ENCODE measurements at regions of chr16 and their contacts with region 1.

Region 1: GRCh38 chr16:81696961-81697615 is 82.0 kb upstream of the PLCG2 start:
- DNase-seq: peak; percentile 57 to 82
- H3K4me3 ChIP-seq: no peak overlapping the region
- H3K27ac ChIP-seq: no peak overlapping the region
- H3K4me1 ChIP-seq: no peaks in the 10 kb centered on the region
- H3K27me3 ChIP-seq: no peaks in the 10 kb centered on the region
- CTCF ChIP-seq: peak; percentile 93 to 99 (median 98)
- EP300 ChIP-seq: no peak
- POLR2A ChIP-seq: no peak
- RAD21 ChIP-seq: peak; percentile 94 to 97

Region 2: DNA sequence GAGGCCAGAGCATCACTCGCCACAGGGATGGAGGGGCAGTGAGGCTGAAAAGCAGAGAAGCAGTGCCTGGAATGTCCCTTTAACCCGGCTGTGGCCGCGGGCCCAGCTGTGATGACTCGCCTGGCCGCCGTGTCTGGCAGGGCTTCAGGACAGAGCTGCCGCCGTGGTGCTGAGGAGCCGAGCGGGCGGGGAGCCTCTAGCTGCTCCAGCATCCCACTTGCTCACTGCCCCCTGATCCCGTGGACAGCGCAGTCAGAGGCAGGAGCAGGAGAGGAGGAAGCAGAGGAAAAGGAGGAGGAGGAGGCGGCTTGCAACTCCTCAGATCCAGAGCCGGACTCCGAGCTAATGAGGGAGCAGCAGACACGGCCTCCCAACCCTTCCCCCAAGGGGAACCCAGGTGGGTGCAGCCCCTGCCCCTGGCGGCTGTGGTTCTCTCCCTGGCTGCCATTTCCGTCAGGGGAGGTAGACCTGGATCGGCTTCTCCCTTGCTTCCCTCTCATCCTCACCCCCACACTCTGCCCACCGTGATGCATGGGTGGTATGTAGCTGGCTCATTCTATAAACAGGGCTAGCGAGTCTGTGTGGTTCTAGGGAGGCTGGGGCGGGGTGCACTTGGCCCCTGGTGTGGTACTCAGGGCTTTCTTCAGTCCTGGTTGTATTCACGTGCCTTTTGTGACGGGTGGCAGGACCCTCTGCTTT is 86.8 kb before region 1 on chr16:
- CTCF ChIA-PET with region 1: interaction called, 134 read pairs
- POLR2A ChIA-PET with region 1: no interaction called
- DNase-seq: no peak
- H3K4me3 ChIP-seq: no peak overlapping the region
- H3K27ac ChIP-seq: no peak overlapping the region
- H3K4me1 ChIP-seq: no peaks in the 10 kb centered on the region; a peak in 1 of 7 replicates
- H3K27me3 ChIP-seq: no peaks in the 10 kb centered on the region; a peak in 1 of 7 replicates
- CTCF ChIP-seq: no peak
- EP300 ChIP-seq: no peak
- POLR2A ChIP-seq: no peak
- RAD21 ChIP-seq: no peak

Region 3: DNA sequence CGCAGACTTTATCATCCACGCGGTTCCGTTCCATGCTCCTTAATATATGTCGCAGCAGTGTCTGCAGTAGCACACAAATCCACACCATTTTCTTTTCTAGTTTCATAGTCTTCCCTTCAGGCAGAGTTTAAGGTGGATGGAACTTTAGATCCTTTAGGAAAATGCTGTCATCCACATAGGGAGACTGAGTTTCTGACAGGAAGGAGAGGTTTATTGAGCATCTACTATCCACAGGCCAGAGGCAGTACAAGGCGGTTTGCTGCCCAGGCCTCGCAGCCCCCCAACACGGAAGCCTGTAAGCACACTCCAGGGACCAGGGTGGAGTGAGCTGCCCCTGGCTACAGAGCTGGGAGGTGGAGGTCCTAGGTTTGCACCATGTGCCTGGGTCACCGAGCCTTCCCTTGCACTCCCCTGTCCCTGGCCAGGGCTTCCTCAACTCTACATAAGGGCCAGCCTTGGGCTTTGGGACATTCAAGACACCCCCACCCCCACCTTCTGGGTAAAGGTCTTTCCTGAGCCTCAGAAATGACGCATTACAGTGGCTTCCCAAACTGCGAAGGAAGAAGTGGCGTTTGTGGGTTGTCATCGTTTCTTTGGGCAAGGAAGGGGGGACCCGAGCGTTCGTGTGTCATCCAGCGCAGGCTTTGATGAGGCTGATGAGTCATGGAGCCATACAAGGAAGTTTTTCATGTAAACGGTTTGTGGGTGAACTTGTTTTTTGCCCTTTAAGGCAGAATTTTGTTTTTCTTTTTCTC is 64.5 kb before region 1 on chr16:
- CTCF ChIA-PET with region 1: interaction called, 27 read pairs
- POLR2A ChIA-PET with region 1: no interaction called
- DNase-seq: no peak
- H3K4me3 ChIP-seq: no peak overlapping the region
- H3K27ac ChIP-seq: peak overlapping the region; percentile 41; the same call in 1 of the 2 replicates
- H3K4me1 ChIP-seq: peaks cover 8 to 43% (median 16%) of the 10 kb centered on the region in 4 experiments
- H3K27me3 ChIP-seq: no peaks in the 10 kb centered on the region
- CTCF ChIP-seq: no peak
- EP300 ChIP-seq: no peak
- POLR2A ChIP-seq: no peak
- RAD21 ChIP-seq: no peak

Region 4: GRCh38 chr16:81686391-81687130 is 10.5 kb before region 1 on chr16:
- CTCF ChIA-PET with region 1: interaction called, 36 read pairs
- POLR2A ChIA-PET with region 1: interaction called, 3 read pairs
- DNase-seq: no peak
- H3K4me3 ChIP-seq: no peak overlapping the region
- H3K27ac ChIP-seq: no peak overlapping the region
- H3K4me1 ChIP-seq: peaks cover 0 to 5% (median 0%) of the 10 kb centered on the region in 4 experiments; a peak in 4 of 7 replicates
- H3K27me3 ChIP-seq: no peaks in the 10 kb centered on the region
- CTCF ChIP-seq: no peak
- EP300 ChIP-seq: no peak
- POLR2A ChIP-seq: no peak
- RAD21 ChIP-seq: no peak

Region 5: GRCh38 chr16:81717662-81718189 is 20.6 kb after region 1 on chr16:
- CTCF ChIA-PET with region 1: interaction called, 17 read pairs
- POLR2A ChIA-PET with region 1: no interaction called
- DNase-seq: no peak
- H3K4me3 ChIP-seq: no peak overlapping the region
- H3K27ac ChIP-seq: no peak overlapping the region
- H3K4me1 ChIP-seq: peaks cover 0 to 27% (median 15%) of the 10 kb centered on the region in 4 experiments; a peak in 4 of 7 replicates
- H3K27me3 ChIP-seq: 0 out of 7 replicates have a peak, but pooled peaks cover 0 to 2% (median 0%) of the 10 kb centered on the region in 4 experiments
- CTCF ChIP-seq: no peak
- EP300 ChIP-seq: no peak
- POLR2A ChIP-seq: no peak
- RAD21 ChIP-seq: no peak

Region 6: GRCh38 chr16:81730090-81731051 is 33.3 kb after region 1 on chr16:
- CTCF ChIA-PET with region 1: interaction called, 24 read pairs
- POLR2A ChIA-PET with region 1: interaction called, 3 read pairs
- DNase-seq: peak; percentile 99
- H3K4me3 ChIP-seq: peak overlapping the region; percentile 7 to 55 (median 34); a peak in 6 of 8 replicates
- H3K27ac ChIP-seq: peak overlapping the region; percentile 80
- H3K4me1 ChIP-seq: peaks cover 0 to 7% (median 4%) of the 10 kb centered on the region in 4 experiments; a peak in 5 of 7 replicates
- H3K27me3 ChIP-seq: no peaks in the 10 kb centered on the region
- CTCF ChIP-seq: peak; percentile 77 to 100 (median 91)
- EP300 ChIP-seq: peak in 1 of 2 experiments; percentile 84; a peak in 2 of 3 replicates
- POLR2A ChIP-seq: peak in 1 of 2 experiments; percentile 67; a peak in 2 of 3 replicates
- RAD21 ChIP-seq: peak; percentile 56 to 59

Measured in H1 (cell line).